Panc1 (cell line): ENCODE measurements at regions of chr16 and their contacts with region 1.

Region 1: DNA sequence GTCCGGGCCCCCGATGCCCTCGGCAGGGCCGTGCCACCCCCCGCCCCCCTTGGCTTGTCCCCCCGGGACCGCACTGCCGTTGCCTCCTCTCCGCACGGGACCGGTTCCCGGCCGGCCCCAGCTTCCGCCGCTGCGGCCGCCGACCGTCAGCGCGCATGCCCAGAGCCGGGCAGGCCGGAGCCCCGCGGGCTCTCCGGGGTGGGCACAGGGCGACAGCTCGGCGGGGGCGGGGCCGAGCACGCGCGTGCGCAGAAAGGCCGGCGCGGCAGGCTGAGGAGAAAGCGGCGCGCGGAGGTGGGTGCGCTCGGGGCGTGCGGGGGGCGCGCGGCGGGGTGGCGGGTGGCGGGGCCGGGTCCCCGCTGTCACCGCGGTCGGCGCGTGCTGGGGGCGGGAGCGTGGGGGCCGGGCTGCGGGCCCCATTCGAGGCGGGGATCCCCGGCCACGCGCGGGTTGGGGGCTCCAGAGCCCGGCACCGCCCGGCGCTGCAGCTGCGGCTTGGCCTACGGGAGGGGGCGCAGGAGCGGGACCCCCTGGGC is at the start of gene TBC1D24:
- DNase-seq: no peak
- ATAC-seq: peak; percentile 73
- H3K4me3 ChIP-seq: peak within 1 kb of the TSS; percentile 60 to 68
- H3K27ac ChIP-seq: peak within 1 kb of the TSS; percentile 85
- H3K4me1 ChIP-seq: peaks cover 43% of the 10 kb centered on the region
- H3K27me3 ChIP-seq: no peaks in the 10 kb centered on the region
- CTCF ChIP-seq: no peak
- total RNA-seq, gene TBC1D24: 26.7 TPM

Region 2: DNA sequence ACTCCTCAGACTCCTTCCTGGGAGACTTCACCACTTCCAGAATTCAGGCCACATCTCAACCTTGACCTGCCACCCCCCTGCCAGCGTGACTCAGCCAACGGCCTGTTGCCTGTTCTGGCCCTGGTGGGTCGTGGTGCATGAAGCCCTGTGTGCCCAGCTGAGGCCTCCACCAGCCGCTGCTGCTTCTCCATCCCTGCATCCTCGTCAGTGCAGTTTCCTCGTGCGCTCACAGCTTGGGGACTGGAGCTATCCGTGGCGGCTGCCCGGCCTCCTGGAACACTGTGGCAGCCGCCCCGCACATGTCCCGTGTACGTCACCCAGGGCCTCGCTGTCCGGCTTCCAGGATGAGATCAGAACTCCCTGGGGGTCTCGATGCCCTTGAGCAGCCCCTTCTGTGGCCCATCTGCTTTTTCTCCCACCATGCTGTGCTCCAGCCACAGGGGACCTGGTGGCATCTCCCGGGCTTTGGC is 23.1 kb before region 1 on chr16:
- CTCF ChIA-PET with region 1: interaction called, 13 read pairs
- POLR2A ChIA-PET with region 1: interaction called, 8 read pairs
- in situ Hi-C with region 1: no loop called
- intact Hi-C with region 1: no loop called
- DNase-seq: no peak
- ATAC-seq: no peak; the same call in 1 of the 2 replicates
- H3K4me3 ChIP-seq: no peak overlapping the region
- H3K27ac ChIP-seq: no peak overlapping the region
- H3K4me1 ChIP-seq: no peaks in the 10 kb centered on the region
- H3K27me3 ChIP-seq: no peaks in the 10 kb centered on the region
- CTCF ChIP-seq: no peak